ENCODE measurements at regions of chr1 and their contacts with region 1.

Region 1: GRCh38 chr1:232950197-232951176 is at the start of gene NTPCR:
- DNase-seq: peak; percentile 96
- ATAC-seq: peak; percentile 96
- total RNA-seq, gene NTPCR: 53.2 TPM

Region 2: GRCh38 chr1:232805269-232806185 is 145.0 kb before region 1 on chr1 and contains the start of gene MAP10:
- intact Hi-C with region 1: loop called (anchors 2 kb)
- DNase-seq: peak; percentile 87
- ATAC-seq: peak; percentile 89
- total RNA-seq, gene MAP10: 3.3 TPM

Measured in Right ventricle myocardium inferior (tissue), 1 donor.